ENCODE measurements at regions of chr5 and their contacts with region 1.

Region 1: DNA sequence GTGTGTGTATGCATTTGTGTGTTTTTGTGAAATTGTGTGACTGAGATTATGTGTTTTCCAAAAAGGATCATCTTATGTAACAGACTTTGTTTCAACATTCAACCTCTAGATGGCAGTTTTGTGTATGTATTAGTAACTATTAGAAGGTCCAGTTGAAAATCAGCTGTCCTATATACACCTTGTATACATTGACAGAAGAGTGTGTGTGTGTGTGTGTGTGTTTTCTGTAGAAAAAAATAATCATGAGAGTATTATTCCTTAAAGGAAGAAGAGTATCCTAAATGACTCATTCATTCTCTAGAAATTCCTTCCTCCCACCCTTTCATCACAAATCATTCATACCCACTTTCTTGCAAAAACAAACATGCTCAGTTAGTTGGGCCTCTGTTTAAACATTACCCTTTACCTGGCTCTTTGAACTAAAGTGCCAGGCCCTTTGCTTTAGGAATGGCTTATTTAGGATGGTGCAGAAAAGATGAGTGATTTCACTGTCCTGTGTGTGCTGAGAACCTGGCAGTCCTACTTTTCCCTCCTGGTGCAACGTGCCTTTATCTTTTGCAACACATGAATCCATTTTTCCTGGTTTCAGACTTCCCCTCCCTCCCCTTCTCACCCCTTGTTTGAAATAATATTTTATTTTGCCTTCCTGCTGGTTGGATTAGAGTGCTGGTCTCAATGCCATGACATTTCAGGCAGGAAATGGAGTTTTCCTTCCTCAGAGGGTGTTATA is 152.2 kb downstream of the ARHGAP26 start:
- DNase-seq: peak; percentile 56
- H3K4me3 Mint-ChIP-seq: no peak overlapping the region
- H3K27ac Mint-ChIP-seq: no peak overlapping the region
- H3K4me1 Mint-ChIP-seq: peaks cover 25% of the 10 kb centered on the region
- H3K27me3 Mint-ChIP-seq: no peaks in the 10 kb centered on the region
- CTCF ChIP-seq: peak; percentile 68

Region 2: GRCh38 chr5:143008809-143009521 is 86.6 kb after region 1 on chr5:
- CTCF ChIA-PET with region 1: interaction called, 4 read pairs
- POLR2A ChIA-PET with region 1: no interaction called
- intact Hi-C with region 1: loop called (anchors 1 kb)
- DNase-seq: peak; percentile 95
- H3K4me3 Mint-ChIP-seq: peak overlapping the region; percentile 43
- H3K27ac Mint-ChIP-seq: peak overlapping the region; percentile 75
- H3K4me1 Mint-ChIP-seq: peaks cover 24% of the 10 kb centered on the region
- H3K27me3 Mint-ChIP-seq: no peaks in the 10 kb centered on the region
- CTCF ChIP-seq: peak; percentile 14

Region 3: DNA sequence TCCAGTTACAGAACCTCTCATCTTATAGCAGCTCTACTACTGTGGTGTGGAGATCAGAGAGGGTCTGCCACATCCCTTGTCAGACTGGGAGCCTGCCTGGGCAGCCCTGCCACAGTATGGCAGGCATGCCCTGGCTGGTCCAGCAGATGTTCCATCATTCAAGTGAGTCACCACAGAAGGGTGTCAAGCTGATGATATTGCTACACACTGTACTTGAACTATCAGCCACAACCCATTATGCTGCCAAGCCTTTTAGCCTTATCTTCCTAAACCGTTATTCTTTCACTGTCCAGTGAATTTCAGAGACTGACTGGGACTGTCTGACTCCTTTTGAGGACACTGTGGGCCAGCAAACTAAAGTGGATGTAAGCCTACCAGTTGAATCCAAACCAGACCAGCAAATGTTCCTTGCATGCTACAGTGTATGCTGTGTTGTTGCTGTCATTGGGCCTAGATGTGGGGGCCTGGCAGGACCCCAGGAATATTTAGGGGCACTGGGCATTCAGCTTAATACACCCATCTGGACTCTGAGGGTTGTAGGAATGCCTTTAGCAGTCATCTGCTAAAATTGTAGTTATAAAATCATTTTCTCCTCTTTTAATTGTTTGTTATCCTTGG is 278.5 kb after region 1 on chr5:
- CTCF ChIA-PET with region 1: interaction called, 3 read pairs
- POLR2A ChIA-PET with region 1: interaction called, 7 read pairs
- intact Hi-C with region 1: loop called (anchors 10 kb)
- DNase-seq: peak; percentile 97
- H3K4me3 Mint-ChIP-seq: peak overlapping the region; percentile 15
- H3K27ac Mint-ChIP-seq: peak overlapping the region; percentile 84
- H3K4me1 Mint-ChIP-seq: peaks cover 45% of the 10 kb centered on the region
- H3K27me3 Mint-ChIP-seq: no peaks in the 10 kb centered on the region
- CTCF ChIP-seq: no peak

Region 4: GRCh38 chr5:143359869-143360268 is 437.5 kb after region 1 on chr5:
- CTCF ChIA-PET with region 1: no interaction called
- POLR2A ChIA-PET with region 1: no interaction called
- intact Hi-C with region 1: no loop called
- DNase-seq: no peak
- H3K4me3 Mint-ChIP-seq: no peak overlapping the region
- H3K27ac Mint-ChIP-seq: peak overlapping the region; percentile 11
- H3K4me1 Mint-ChIP-seq: peaks cover 31% of the 10 kb centered on the region
- H3K27me3 Mint-ChIP-seq: no peaks in the 10 kb centered on the region
- CTCF ChIP-seq: no peak

Region 5: DNA sequence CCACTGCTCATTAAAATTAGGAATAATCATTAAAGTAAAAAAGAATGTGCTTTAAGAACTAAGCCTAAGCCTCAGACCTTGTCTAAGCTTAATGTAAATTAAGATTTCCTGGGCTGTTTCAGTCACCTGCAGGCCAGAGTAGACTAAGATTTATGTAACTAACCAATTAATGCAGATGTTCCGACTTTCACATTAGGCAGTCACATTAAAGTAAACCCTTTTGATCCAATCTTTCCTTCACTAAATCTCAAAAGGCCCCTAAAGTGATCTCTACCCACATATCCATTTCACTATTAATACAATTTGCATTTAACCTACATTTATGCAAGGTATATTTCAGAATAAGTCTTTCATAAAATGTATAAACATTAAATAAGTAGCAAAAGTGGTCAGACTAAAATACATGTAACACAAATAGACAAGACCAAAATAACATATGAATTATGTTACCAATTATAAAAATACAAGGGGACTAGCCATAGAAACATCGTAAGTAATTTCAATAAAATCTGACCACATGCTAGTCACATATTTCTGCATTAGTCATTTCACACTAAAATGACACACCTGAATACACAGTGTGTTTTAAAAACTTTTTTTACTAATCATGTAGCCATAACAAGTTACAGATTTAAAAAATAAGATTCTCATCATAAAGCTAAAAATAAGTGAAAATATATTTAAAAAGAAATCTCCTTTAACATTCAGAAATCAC is 473.4 kb after region 1 on chr5:
- CTCF ChIA-PET with region 1: interaction called, 6 read pairs
- POLR2A ChIA-PET with region 1: interaction called, 11 read pairs
- intact Hi-C with region 1: loop called (anchors 1 kb)
- DNase-seq: peak; percentile 49
- H3K4me3 Mint-ChIP-seq: peak overlapping the region; percentile 98
- H3K27ac Mint-ChIP-seq: peak overlapping the region; percentile 99
- H3K4me1 Mint-ChIP-seq: peaks cover 49% of the 10 kb centered on the region
- H3K27me3 Mint-ChIP-seq: no peaks in the 10 kb centered on the region
- CTCF ChIP-seq: no peak

Region 6: GRCh38 chr5:143824851-143825720 is 902.7 kb after region 1 on chr5:
- CTCF ChIA-PET with region 1: interaction called, 63 read pairs
- POLR2A ChIA-PET with region 1: interaction called, 4 read pairs
- intact Hi-C with region 1: loop called (anchors 1 kb)
- DNase-seq: peak; percentile 84
- H3K4me3 Mint-ChIP-seq: no peak overlapping the region
- H3K27ac Mint-ChIP-seq: no peak overlapping the region
- H3K4me1 Mint-ChIP-seq: peaks cover 6% of the 10 kb centered on the region
- H3K27me3 Mint-ChIP-seq: no peaks in the 10 kb centered on the region
- CTCF ChIP-seq: peak; percentile 99

Region 7: GRCh38 chr5:144183254-144183889 is 1261.0 kb after region 1 on chr5:
- CTCF ChIA-PET with region 1: interaction called, 3 read pairs
- POLR2A ChIA-PET with region 1: no interaction called
- intact Hi-C with region 1: loop called (anchors 5 kb)
- DNase-seq: peak; percentile 64
- H3K4me3 Mint-ChIP-seq: no peak overlapping the region
- H3K27ac Mint-ChIP-seq: no peak overlapping the region
- H3K4me1 Mint-ChIP-seq: peaks cover 14% of the 10 kb centered on the region
- H3K27me3 Mint-ChIP-seq: no peaks in the 10 kb centered on the region
- CTCF ChIP-seq: peak; percentile 74

Measured in MCF 10A (cell line).